ENCODE measurements at regions of chr13 and their contacts with region 1.

Region 1: GRCh38 chr13:99087096-99087953 is 109.5 kb upstream of the DOCK9 start:
- DNase-seq: peak; percentile 84
- ATAC-seq: peak; percentile 75
- H3K4me3 ChIP-seq: peak overlapping the region; percentile 87
- H3K27ac ChIP-seq: peak overlapping the region; percentile 8; the same call in 1 of the 2 replicates
- H3K4me1 ChIP-seq: peaks cover 6% of the 10 kb centered on the region
- H3K27me3 ChIP-seq: no peaks in the 10 kb centered on the region
- CTCF ChIP-seq: 0 out of 2 replicates have a peak, but pooled peaks have one; percentile 11

Region 2: GRCh38 chr13:99067160-99067985 is 20.0 kb before region 1 on chr13:
- CTCF ChIA-PET with region 1: no interaction called
- POLR2A ChIA-PET with region 1: no interaction called
- intact Hi-C with region 1: loop called (anchors 1 kb)
- DNase-seq: peak; percentile 87
- ATAC-seq: peak; percentile 85
- H3K4me3 ChIP-seq: no peak overlapping the region; the same call in 1 of the 2 replicates
- H3K27ac ChIP-seq: peak overlapping the region; percentile 53
- H3K4me1 ChIP-seq: peaks cover 25% of the 10 kb centered on the region
- H3K27me3 ChIP-seq: no peaks in the 10 kb centered on the region
- CTCF ChIP-seq: no peak

Region 3: DNA sequence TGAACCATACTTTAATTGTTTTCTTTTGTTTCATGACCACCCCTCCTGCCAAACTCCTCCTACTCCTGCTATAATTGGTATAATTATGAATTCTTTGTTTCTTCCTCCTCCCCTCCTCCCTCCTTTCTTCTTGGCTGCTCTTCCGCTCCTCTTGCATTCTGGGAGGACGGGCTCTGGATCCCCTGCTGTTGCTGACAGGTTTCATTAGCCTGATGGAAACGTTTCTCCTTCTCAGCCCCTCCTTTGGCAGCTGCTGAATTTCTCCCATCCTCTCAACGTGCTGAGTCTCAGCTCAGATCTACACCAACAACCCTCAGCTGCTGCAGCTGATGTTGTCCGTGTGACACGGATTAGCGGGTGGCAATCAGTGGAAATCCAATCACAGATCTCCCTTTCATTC is 16.2 kb after region 1 on chr13:
- CTCF ChIA-PET with region 1: no interaction called
- POLR2A ChIA-PET with region 1: no interaction called
- intact Hi-C with region 1: no loop called
- DNase-seq: no peak
- ATAC-seq: no peak
- H3K4me3 ChIP-seq: no peak overlapping the region
- H3K27ac ChIP-seq: no peak overlapping the region
- H3K4me1 ChIP-seq: no peaks in the 10 kb centered on the region
- H3K27me3 ChIP-seq: no peaks in the 10 kb centered on the region
- CTCF ChIP-seq: no peak

Region 4: GRCh38 chr13:99442273-99442895 is 355.1 kb after region 1 on chr13:
- CTCF ChIA-PET with region 1: no interaction called
- POLR2A ChIA-PET with region 1: no interaction called
- intact Hi-C with region 1: no loop called
- DNase-seq: peak; percentile 64
- ATAC-seq: peak; percentile 33; the same call in 1 of the 2 replicates
- H3K4me3 ChIP-seq: no peak overlapping the region
- H3K27ac ChIP-seq: no peak overlapping the region
- H3K4me1 ChIP-seq: peaks cover 9% of the 10 kb centered on the region; the same call in 1 of the 2 replicates
- H3K27me3 ChIP-seq: no peaks in the 10 kb centered on the region
- CTCF ChIP-seq: peak; percentile 72

Measured in PC-3 (cell line).